Activated CD4-positive, alpha-beta memory T cell treated with anti-CD3 and anti-CD28 coated beads, Interleukin-2, amount 10 ng/mL, durations not matched to agents 7 days and 5 days (primary cell): ENCODE measurements at regions of chr6 and their contacts with region 1.

Region 1: DNA sequence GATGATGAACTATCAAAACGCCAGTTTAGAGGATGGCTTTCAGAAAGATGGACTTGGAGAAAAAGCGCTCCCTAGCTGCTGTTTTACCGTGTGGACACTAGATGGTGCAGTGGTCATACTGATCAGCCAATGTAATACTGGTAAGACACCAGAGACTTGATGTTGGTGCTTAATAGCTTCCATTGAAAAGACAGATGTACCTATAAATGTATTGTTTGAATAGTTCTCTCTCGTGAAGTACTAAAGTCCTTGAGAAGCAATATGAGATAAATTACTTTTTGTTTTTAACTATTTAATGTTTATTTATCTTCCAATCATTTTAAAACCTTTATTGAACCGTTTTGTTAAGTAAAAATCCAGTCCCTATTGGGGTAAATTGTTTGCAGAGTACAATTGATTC is 63.9 kb upstream of the FUCA2 start:
- DNase-seq: peak; percentile 50
- H3K4me3 Mint-ChIP-seq: no peak overlapping the region
- H3K27ac Mint-ChIP-seq: no peak overlapping the region
- H3K4me1 Mint-ChIP-seq: peaks cover 1% of the 10 kb centered on the region
- H3K27me3 Mint-ChIP-seq: peaks cover 3% of the 10 kb centered on the region

Region 2: DNA sequence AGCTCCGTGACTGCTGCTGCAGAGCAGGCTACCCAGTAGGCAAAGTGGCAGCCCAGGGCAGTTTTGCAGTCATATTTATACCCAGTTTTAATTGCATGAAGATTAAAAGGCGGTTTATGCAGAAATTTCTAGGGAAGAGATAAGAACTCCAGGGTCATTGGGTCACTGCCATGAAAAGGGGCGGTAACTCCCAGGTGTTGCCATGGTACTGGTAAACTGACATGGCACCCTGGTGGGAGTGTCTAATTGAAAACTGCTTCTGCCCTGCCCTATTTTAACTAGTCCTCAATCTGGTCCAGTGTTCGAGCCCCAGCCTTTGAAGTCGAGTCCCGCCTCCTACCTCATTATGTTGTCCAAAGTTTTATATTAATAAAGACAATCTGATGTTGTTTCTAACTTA is 11.1 kb after region 1 on chr6:
- CTCF ChIA-PET with region 1: interaction called, 13 read pairs
- POLR2A ChIA-PET with region 1: no interaction called
- DNase-seq: no peak
- H3K4me3 Mint-ChIP-seq: no peak overlapping the region
- H3K27ac Mint-ChIP-seq: no peak overlapping the region
- H3K4me1 Mint-ChIP-seq: peaks cover 6% of the 10 kb centered on the region
- H3K27me3 Mint-ChIP-seq: no peaks in the 10 kb centered on the region

Region 3: DNA sequence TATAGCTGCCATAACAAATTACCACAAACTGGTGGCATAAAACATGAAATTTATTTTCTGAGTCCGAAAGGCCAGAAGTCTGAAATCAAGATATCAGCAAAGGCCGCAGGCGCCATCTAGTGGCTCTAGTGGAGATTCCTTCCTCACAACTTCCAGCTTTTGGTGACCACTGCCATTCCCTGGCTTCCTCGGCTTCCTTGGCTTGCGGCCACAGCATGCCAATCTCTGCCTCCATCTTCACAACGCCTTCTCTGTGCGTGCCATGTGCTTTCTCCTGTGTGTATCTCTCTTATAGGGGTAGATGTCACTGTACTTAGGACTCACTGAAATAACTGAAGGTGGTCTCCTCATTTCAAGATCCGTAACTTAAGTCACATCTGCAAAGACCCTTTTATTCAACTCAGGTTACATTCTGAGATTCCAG is 438.1 kb after region 1 on chr6:
- CTCF ChIA-PET with region 1: interaction called, 40 read pairs
- POLR2A ChIA-PET with region 1: no interaction called
- DNase-seq: peak; percentile 66
- H3K4me3 Mint-ChIP-seq: no peak overlapping the region
- H3K27ac Mint-ChIP-seq: no peak overlapping the region
- H3K4me1 Mint-ChIP-seq: peaks cover 2% of the 10 kb centered on the region
- H3K27me3 Mint-ChIP-seq: peaks cover 24% of the 10 kb centered on the region